HCT116 (cell line): ENCODE measurements at regions of chr4 and their contacts with region 1.

Region 1: DNA sequence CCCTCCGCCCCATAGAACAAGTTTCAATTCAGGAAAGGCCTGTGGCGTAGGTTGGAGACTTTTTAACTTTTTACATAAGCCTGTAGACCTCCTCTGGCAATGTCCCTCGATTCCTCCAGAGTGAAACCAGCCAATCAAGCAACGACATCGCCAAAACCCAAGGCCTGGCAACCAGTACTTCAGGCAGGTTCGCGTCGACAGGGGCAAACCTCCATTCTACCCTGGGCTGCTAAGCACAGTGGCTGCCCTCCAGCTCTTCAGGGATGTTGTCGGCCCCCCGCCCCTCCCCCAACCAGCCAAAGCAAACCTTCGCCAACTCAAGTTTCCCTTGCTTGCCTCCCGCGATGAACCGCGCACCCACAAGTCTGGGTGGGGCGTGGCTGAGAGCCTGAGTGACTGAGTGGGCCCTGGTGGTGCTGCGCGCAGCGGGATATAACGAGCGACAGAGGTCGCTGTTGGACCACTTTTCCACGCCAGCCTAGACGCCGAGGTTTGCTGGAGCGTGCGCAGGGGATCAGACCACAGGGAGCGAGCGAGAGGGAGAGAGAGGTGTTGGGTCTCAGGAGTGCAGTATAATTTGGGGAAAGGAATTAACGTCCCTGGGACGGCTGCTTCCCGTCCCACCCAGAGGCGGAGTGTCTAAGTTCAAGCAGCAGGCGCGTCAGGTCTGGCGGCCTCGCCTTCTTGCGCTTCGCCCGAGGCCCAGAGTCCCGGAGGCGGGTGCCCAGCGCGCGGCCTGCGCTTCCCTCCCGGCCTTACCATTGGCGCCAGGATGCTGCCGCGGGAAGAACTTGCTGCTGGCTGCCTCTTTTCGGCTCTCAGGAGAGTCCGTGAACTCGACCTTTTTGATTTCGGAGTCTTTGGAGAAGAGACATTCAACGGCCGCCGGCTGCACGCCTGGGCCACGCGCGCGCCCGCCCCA is 9.0 kb upstream of the PITX2 start:
- DNase-seq: peak; percentile 68
- ATAC-seq: peak; percentile 95
- H3K4me3 ChIP-seq: peak overlapping the region; percentile 1 to 24; a peak in 1 of 4 replicates
- H3K27ac ChIP-seq: no peak overlapping the region
- H3K4me1 ChIP-seq: peaks cover 4 to 17% of the 10 kb centered on the region in 2 experiments; a peak in 3 of 4 replicates
- H3K27me3 ChIP-seq: no peaks in the 10 kb centered on the region
- CTCF ChIP-seq: peak; percentile 81 to 91 (median 86)
- POLR2A ChIP-seq: no peak
- RAD21 ChIP-seq: peak; percentile 96

Region 2: GRCh38 chr4:110926841-110927400 is 295.1 kb after region 1 on chr4:
- CTCF ChIA-PET with region 1: no interaction called
- POLR2A ChIA-PET with region 1: no interaction called
- RAD21 ChIA-PET with region 1: no interaction called
- intact Hi-C with region 1: no loop called
- DNase-seq: no peak
- ATAC-seq: no peak
- H3K4me3 ChIP-seq: no peak overlapping the region
- H3K27ac ChIP-seq: no peak overlapping the region
- H3K4me1 ChIP-seq: no peaks in the 10 kb centered on the region
- H3K27me3 ChIP-seq: no peaks in the 10 kb centered on the region
- CTCF ChIP-seq: no peak
- POLR2A ChIP-seq: no peak
- RAD21 ChIP-seq: no peak

Region 3: GRCh38 chr4:110959041-110959643 is 327.3 kb after region 1 on chr4:
- CTCF ChIA-PET with region 1: interaction called, 3 read pairs
- POLR2A ChIA-PET with region 1: no interaction called
- RAD21 ChIA-PET with region 1: no interaction called
- intact Hi-C with region 1: loop called (anchors 1 kb)
- DNase-seq: no peak
- ATAC-seq: no peak; the same call in 1 of the 2 replicates
- H3K4me3 ChIP-seq: no peak overlapping the region
- H3K27ac ChIP-seq: no peak overlapping the region
- H3K4me1 ChIP-seq: no peaks in the 10 kb centered on the region
- H3K27me3 ChIP-seq: no peaks in the 10 kb centered on the region
- CTCF ChIP-seq: peak; percentile 35 to 68 (median 49); a peak in 5 of 6 replicates
- POLR2A ChIP-seq: no peak
- RAD21 ChIP-seq: peak; percentile 73

Region 4: DNA sequence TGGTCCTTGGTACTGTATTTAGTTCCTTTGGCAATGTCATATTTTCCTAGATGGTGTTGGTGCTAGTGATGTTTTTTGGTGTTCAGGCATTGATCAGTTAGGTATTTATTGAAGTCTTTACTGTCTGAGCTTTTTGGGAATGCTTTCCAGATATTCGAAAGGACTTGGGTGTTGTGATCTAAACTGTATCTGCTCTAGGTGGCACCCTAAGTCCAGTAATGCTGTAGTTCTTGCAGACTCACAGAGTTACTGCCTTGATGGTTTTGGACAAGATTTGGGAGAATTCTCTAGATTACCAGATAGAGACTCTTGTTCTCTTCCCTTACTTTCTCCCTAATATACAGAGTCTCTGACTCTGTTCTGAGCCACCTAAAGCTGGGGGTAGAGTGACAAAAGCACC is 504.6 kb after region 1 on chr4:
- CTCF ChIA-PET with region 1: no interaction called
- POLR2A ChIA-PET with region 1: no interaction called
- RAD21 ChIA-PET with region 1: no interaction called
- intact Hi-C with region 1: loop called (anchors 10 kb)
- DNase-seq: peak; percentile 31
- ATAC-seq: peak; percentile 67; the same call in 1 of the 2 replicates
- H3K4me3 ChIP-seq: no peak overlapping the region
- H3K27ac ChIP-seq: no peak overlapping the region
- H3K4me1 ChIP-seq: no peaks in the 10 kb centered on the region
- H3K27me3 ChIP-seq: no peaks in the 10 kb centered on the region
- CTCF ChIP-seq: peak in 2 of 3 experiments; percentile 39 to 44; a peak in 3 of 6 replicates
- POLR2A ChIP-seq: no peak
- RAD21 ChIP-seq: peak; percentile 73

Region 5: GRCh38 chr4:111475001-111475400 is 843.2 kb after region 1 on chr4:
- CTCF ChIA-PET with region 1: no interaction called
- POLR2A ChIA-PET with region 1: no interaction called
- RAD21 ChIA-PET with region 1: no interaction called
- intact Hi-C with region 1: loop called (anchors 1 kb)
- DNase-seq: peak; percentile 38
- ATAC-seq: peak; percentile 70
- H3K4me3 ChIP-seq: no peak overlapping the region
- H3K27ac ChIP-seq: no peak overlapping the region
- H3K4me1 ChIP-seq: no peaks in the 10 kb centered on the region
- H3K27me3 ChIP-seq: no peaks in the 10 kb centered on the region
- CTCF ChIP-seq: peak; percentile 53 to 60 (median 54); a peak in 5 of 6 replicates
- POLR2A ChIP-seq: no peak
- RAD21 ChIP-seq: peak; percentile 72

Region 6: GRCh38 chr4:111854494-111855087 is 1222.7 kb after region 1 on chr4:
- CTCF ChIA-PET with region 1: no interaction called
- POLR2A ChIA-PET with region 1: no interaction called
- RAD21 ChIA-PET with region 1: no interaction called
- intact Hi-C with region 1: loop called (anchors 10 kb)
- DNase-seq: peak; percentile 39
- ATAC-seq: peak; percentile 82
- H3K4me3 ChIP-seq: no peak overlapping the region
- H3K27ac ChIP-seq: no peak overlapping the region
- H3K4me1 ChIP-seq: no peaks in the 10 kb centered on the region
- H3K27me3 ChIP-seq: no peaks in the 10 kb centered on the region
- CTCF ChIP-seq: peak; percentile 55 to 89 (median 78)
- POLR2A ChIP-seq: no peak
- RAD21 ChIP-seq: peak; percentile 84

Region 7: DNA sequence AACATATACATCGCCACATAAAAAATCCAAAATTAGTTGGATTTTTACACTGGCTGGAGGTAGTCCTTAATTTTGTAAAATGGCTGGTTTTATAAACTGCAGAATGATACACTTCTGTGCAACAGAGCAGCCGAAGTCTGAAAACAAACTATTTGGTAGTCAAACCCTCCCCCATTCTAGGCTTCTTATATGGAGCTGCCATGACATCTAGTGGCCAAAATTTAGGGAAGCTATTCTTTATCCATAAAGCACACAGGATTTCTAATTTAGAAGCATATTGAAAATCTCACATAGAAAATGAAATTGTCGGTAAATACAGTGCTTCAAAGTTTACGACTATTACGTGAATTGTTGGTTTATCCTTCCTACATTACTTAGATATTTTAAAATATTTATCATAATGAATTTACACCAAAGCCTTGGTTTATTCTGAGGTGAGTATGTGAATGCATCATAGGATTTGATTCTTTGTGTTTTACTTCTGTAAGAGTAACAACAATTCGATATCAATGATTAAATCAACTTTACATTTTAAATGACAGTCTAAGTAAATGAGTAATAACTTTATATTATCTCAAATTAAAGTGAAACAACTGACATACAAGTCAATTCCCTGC is 1400.0 kb after region 1 on chr4:
- CTCF ChIA-PET with region 1: no interaction called
- POLR2A ChIA-PET with region 1: no interaction called
- RAD21 ChIA-PET with region 1: no interaction called
- intact Hi-C with region 1: loop called (anchors 5 kb)
- DNase-seq: peak; percentile 48
- ATAC-seq: peak; percentile 78; the same call in 1 of the 2 replicates
- H3K4me3 ChIP-seq: no peak overlapping the region
- H3K27ac ChIP-seq: no peak overlapping the region
- H3K4me1 ChIP-seq: no peaks in the 10 kb centered on the region
- H3K27me3 ChIP-seq: no peaks in the 10 kb centered on the region
- CTCF ChIP-seq: peak; percentile 59 to 90 (median 83); a peak in 5 of 6 replicates
- POLR2A ChIP-seq: no peak
- RAD21 ChIP-seq: peak; percentile 93